PC-9 (cell line): ENCODE measurements at regions of chr11 and their contacts with region 1.

Region 1: DNA sequence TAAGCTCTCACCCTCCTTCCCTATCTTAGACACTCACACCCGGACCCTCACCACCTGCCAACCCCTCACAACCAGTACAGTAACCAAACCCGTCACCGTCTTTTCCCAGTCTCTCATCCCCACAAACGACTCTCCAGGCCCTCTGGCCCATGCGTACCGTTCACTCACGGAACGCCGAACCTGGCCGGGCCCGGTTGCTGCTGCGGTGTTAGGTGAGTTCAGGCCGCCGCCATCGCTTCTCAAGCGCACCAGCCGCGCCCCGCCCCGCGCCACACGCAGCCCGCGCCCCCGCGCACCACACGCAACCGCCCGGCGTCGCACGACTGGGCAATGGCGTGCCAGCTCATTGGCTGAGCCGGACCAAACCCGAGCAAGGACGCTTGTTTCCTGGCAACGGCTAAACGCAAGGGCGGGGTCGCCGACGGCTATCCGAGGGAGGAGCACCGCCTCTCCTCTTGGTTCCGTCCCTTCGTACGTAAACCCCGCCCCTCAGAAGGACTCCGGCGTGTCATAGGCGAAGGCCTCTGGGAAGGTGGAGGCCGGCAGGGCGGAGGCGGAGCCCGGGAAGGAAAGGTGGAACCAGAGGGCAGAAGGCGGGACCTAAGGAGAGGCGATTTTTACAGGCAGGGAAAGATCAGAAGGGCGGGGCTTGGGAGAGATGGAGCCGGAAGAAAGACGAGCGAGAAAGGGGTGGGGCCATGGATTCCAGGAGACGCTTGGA is at the start of gene FHIP1B:
- DNase-seq: peak; percentile 92 to 98
- H3K4me3 ChIP-seq: peak within 1 kb of the TSS; percentile 92
- H3K27ac ChIP-seq: peak within 1 kb of the TSS; percentile 76
- H3K4me1 ChIP-seq: no peaks in the 10 kb centered on the region; the same call in 1 of the 2 replicates
- H3K27me3 ChIP-seq: no peaks in the 10 kb centered on the region
- CTCF ChIP-seq: no peak
- total RNA-seq, gene FHIP1B: 21.5 and 22.7 TPM in 2 replicates

Region 2: GRCh38 chr11:4916581-4916980 is 1318.0 kb before region 1 on chr11:
- CTCF ChIA-PET with region 1: no interaction called
- POLR2A ChIA-PET with region 1: no interaction called
- intact Hi-C with region 1: no loop called
- DNase-seq: no peak
- H3K4me3 ChIP-seq: no peak overlapping the region
- H3K27ac ChIP-seq: no peak overlapping the region
- H3K4me1 ChIP-seq: no peaks in the 10 kb centered on the region
- H3K27me3 ChIP-seq: no peaks in the 10 kb centered on the region
- CTCF ChIP-seq: no peak

Region 3: DNA sequence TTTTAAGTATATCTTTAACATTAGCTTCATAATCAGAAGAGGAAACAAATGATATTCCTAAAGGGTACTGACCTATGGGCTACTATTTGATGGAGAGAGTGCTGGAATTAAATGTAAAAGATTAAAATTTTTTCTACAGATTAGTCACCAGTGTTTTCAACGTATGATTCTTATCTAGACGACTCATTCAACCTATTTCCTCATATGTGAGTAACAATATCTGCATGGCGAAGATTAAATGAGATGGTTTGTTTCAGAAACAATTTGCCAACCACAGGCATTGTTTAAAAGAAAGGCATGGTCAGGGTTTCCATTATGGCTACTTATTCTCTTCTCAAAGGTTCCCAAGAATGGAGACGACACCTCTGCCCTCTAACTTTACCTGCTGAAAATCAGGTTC is 106.7 kb before region 1 on chr11:
- CTCF ChIA-PET with region 1: no interaction called
- POLR2A ChIA-PET with region 1: no interaction called
- intact Hi-C with region 1: no loop called
- DNase-seq: peak in 1 of 2 experiments; percentile 35
- H3K4me3 ChIP-seq: no peak overlapping the region
- H3K27ac ChIP-seq: no peak overlapping the region
- H3K4me1 ChIP-seq: no peaks in the 10 kb centered on the region
- H3K27me3 ChIP-seq: 0 out of 2 replicates have a peak, but pooled peaks cover 2% of the 10 kb centered on the region
- CTCF ChIP-seq: no peak

Region 4: DNA sequence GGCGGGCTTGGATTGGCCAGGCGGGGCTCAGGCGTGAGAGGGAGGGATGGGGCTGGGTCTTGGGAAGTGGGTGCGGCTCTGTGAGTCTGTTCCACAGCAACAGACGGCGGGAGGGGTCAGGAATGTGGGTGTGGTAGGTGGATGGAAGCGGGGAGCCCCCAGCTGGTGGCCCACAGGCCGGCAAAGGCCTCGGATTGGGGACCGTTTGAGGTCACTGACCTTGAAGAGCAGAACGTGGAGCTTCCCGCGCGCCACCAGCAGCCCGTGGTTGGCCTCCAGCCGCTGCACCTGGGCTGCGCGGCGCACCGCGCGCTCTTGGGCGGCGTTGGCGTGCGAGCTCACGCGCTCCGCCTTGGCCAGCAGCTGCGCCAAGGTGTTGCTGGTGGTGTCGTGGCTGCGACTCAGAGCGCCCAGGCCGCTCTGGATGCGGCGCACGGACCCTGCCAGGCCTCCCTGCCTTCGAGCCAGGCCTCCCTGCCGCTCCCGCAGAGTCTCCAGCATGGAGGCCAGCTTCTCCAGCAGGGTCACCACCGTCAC is 85.4 kb after region 1 on chr11:
- CTCF ChIA-PET with region 1: no interaction called
- POLR2A ChIA-PET with region 1: interaction called, 3 read pairs
- intact Hi-C with region 1: loop called (anchors 2 kb)
- DNase-seq: peak in 1 of 2 experiments; percentile 82
- H3K4me3 ChIP-seq: peak overlapping the region; percentile 46
- H3K27ac ChIP-seq: no peak overlapping the region
- H3K4me1 ChIP-seq: no peaks in the 10 kb centered on the region
- H3K27me3 ChIP-seq: no peaks in the 10 kb centered on the region
- CTCF ChIP-seq: no peak

Region 5: DNA sequence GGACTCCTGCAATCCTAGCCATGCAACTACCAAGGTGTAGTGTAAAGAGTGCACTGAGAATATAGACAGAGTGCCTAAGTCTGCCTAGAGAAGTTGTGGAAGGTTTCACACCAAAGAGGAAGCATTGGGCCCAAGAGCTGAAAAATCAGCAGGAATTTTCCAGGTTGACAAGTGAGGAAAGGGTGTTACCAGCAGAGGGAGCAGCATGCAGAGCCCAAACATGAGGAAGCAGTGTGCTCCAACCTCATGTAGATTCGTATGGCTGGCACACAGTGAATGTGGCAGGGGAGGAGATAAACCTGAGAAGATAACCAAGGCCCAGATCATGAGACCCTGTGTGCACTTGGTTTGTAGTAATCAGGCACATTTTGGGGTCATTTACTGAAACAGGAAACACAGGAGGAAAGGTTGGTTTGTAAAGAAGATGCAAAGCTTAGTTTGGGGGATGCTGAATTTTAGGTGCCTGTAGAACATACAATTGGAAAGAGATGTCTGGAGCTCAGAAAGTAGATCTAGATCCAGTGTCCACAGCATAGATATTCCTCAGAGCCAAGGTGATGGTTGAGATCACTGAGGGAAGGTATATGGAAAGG is 204.5 kb after region 1 on chr11:
- CTCF ChIA-PET with region 1: no interaction called
- POLR2A ChIA-PET with region 1: no interaction called
- intact Hi-C with region 1: no loop called
- DNase-seq: peak in 1 of 2 experiments; percentile 25
- H3K4me3 ChIP-seq: no peak overlapping the region
- H3K27ac ChIP-seq: no peak overlapping the region
- H3K4me1 ChIP-seq: no peaks in the 10 kb centered on the region
- H3K27me3 ChIP-seq: no peaks in the 10 kb centered on the region
- CTCF ChIP-seq: peak; percentile 54; the same call in 1 of the 2 replicates

Region 6: DNA sequence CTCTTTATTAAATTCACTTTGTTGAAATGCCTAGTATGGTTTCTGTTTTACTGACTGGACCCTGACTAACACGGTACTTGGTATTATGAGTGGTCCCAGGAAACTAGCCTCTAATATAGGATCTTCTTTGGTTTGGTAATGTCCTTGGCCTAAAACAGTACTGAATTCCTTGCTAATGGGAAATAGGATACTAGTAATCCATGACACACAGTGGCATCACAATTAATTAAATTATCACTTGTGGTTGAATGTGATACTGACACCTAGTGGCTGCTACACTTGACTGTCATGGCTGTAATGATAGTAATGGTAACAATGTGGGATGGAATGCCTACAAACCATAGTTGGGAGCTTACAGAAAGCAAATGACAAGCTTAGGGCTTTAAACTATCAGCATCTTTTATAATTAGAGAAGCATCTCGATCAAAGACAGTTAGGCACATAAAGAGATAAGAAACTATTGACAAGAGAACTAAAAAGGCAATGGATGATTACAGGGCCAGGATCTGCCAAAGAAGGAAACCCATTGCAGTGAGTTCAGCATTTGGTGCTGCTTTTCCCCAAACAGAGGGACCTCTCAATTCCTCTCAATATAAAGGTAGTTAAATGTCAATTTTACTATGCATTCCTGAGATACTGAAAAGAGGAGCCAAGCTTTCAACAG is 271.2 kb after region 1 on chr11:
- CTCF ChIA-PET with region 1: interaction called, 10 read pairs
- POLR2A ChIA-PET with region 1: no interaction called
- intact Hi-C with region 1: no loop called
- DNase-seq: peak in 1 of 2 experiments; percentile 37
- H3K4me3 ChIP-seq: no peak overlapping the region
- H3K27ac ChIP-seq: no peak overlapping the region
- H3K4me1 ChIP-seq: no peaks in the 10 kb centered on the region
- H3K27me3 ChIP-seq: no peaks in the 10 kb centered on the region
- CTCF ChIP-seq: peak; percentile 72